HCT116 (cell line): ENCODE measurements at regions of chr12 and their contacts with region 1.

Region 1: DNA sequence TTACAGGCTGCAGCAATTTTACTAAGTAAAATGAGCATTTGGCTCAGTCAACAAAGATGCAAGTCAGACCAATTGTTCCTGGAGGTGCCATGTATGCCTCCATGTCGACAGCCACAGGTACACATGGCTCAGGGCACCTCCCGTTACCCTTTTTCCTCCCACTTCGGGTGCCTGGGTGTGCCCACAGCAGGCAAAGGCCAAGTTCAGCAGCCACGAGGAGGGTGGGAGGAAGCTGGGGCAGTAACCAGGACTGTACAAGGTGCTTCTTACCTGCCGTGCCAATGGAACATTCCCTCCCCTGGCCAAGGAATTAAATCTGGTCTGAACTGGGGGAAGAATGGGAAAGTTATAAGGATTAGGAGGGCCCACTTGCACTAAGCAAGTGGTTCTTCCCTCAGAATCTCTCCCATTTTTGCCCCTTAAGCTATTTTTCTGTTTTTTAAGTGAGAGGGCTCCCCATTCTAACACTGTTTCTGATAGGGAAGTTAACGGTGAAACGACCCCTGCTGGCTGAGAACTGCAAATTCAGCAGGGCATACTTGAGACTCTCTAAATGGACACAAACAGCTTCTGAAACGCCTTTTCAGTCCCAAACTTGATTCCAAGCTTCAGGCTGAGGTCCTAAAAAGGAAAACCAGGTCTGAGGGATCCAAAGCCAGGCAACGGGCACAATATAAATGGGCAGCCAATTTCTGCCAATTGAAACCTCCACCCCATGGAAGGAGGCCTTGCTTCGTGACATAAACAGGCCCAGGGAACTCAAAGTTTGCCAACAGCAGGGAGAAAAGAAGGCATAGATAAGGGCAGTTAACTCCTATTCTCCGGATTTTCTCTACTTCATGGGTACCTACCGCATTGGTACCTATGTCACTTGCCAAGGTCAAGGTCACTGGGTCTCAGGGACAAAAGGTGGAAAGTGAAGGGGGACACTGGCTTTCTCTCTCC is 24.8 kb downstream of the CLECL1 start:
- DNase-seq: peak; percentile 37
- ATAC-seq: peak; percentile 92
- H3K4me3 ChIP-seq: no peak overlapping the region
- H3K27ac ChIP-seq: no peak overlapping the region
- H3K4me1 ChIP-seq: no peaks in the 10 kb centered on the region
- H3K27me3 ChIP-seq: no peaks in the 10 kb centered on the region
- CTCF ChIP-seq: peak; percentile 72 to 88 (median 88)
- POLR2A ChIP-seq: no peak
- RAD21 ChIP-seq: peak; percentile 64

Region 2: GRCh38 chr12:9634177-9634803 is 73.8 kb before region 1 on chr12:
- CTCF ChIA-PET with region 1: interaction called, 8 read pairs
- POLR2A ChIA-PET with region 1: interaction called, 3 read pairs
- RAD21 ChIA-PET with region 1: no interaction called
- intact Hi-C with region 1: loop called (anchors 1 kb)
- DNase-seq: no peak
- ATAC-seq: peak; percentile 70
- H3K4me3 ChIP-seq: no peak overlapping the region
- H3K27ac ChIP-seq: no peak overlapping the region
- H3K4me1 ChIP-seq: no peaks in the 10 kb centered on the region
- H3K27me3 ChIP-seq: no peaks in the 10 kb centered on the region
- CTCF ChIP-seq: peak; percentile 62 to 81 (median 73)
- POLR2A ChIP-seq: no peak
- RAD21 ChIP-seq: peak; percentile 77

Region 3: GRCh38 chr12:10205251-10205807 is 497.2 kb after region 1 on chr12:
- CTCF ChIA-PET with region 1: no interaction called
- POLR2A ChIA-PET with region 1: no interaction called
- RAD21 ChIA-PET with region 1: no interaction called
- intact Hi-C with region 1: no loop called
- DNase-seq: no peak
- ATAC-seq: peak; percentile 62; the same call in 1 of the 2 replicates
- H3K4me3 ChIP-seq: 0 out of 4 replicates have a peak overlapping the region, but pooled peaks of 1 of the 2 experiments have one; percentile 4
- H3K27ac ChIP-seq: no peak overlapping the region
- H3K4me1 ChIP-seq: peaks cover 0 to 15% of the 10 kb centered on the region in 2 experiments; a peak in 2 of 4 replicates
- H3K27me3 ChIP-seq: no peaks in the 10 kb centered on the region
- CTCF ChIP-seq: no peak
- POLR2A ChIP-seq: no peak
- RAD21 ChIP-seq: no peak